ENCODE measurements at regions of chr7 and their contacts with region 1.

Region 1: DNA sequence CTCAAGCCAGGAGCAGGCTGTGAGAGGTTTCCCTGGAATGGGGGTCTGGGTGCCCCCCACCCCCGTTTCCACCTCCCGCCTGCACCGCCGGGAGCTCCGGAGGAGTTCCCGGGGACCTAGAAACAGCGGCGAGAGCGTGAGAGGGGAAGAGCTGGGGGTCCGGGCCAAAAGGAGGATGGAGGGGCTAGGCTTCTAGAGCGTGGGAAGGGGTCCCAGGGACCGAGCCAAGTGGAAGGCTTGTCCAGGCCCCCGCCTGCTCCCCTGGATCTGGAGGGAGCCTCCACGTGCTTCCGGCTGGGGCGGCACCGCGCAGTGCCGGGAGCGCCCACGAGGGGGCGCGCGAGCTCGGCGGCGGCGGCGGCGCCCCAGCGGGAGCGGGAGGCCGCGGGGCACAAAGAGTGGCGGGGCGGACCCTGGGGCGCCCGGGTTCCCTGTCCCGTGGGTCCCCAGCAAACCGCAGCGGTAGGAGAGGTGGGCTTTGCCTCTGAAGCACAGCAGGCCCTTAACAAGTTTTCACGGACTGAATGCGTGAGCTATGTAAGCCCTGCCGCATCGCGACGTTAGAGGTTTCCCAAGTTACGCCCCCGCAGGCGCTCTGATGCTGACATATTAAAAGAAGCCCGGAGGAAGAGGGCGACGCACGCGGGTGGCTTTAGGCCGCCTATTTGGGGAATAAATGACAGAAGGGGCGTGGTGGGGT is 104.4 kb upstream of the LRRC4 start:
- DNase-seq: peak; percentile 63
- H3K4me3 Mint-ChIP-seq: peak overlapping the region; percentile 68
- H3K27ac Mint-ChIP-seq: no peak overlapping the region
- H3K4me1 Mint-ChIP-seq: peaks cover 14% of the 10 kb centered on the region
- H3K27me3 Mint-ChIP-seq: peaks cover 65% of the 10 kb centered on the region

Region 2: GRCh38 chr7:127708788-127709187 is 426.9 kb before region 1 on chr7:
- CTCF ChIA-PET with region 1: interaction called, 12 read pairs
- DNase-seq: peak; percentile 85
- H3K4me3 Mint-ChIP-seq: no peak overlapping the region
- H3K27ac Mint-ChIP-seq: no peak overlapping the region
- H3K4me1 Mint-ChIP-seq: no peaks in the 10 kb centered on the region
- H3K27me3 Mint-ChIP-seq: no peaks in the 10 kb centered on the region

Region 3: DNA sequence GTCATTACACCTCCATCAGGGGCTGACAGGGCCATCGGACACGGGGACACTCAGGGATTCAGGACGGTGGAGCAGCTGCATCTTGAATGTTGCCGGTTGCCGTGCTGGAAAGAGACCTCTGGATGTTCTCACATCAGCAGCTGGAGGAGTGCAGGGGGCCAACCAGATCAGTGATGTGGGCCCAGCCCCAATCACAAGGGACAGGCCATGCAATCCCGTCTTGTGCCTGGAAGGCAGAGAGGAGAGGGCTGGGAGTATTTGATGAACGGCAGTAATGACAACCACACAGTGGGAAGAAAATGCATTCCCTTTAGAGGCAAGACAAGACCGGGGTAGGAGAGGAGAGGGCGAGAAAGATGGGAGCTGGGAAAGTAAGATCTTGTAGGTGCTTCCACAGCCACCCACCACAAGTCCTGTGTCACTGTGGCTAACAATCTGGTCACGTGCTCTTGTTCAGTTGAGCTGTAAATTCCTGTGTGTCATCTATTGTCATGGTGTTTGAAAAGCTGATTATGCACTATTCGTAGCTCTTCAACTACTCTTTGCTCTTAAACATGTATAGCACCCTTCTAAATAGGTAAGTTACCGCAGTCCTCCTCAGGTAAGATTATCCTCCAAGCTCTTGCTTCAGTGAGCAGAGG is 19.6 kb after region 1 on chr7:
- CTCF ChIA-PET with region 1: interaction called, 13 read pairs
- DNase-seq: no peak
- H3K4me3 Mint-ChIP-seq: no peak overlapping the region
- H3K27ac Mint-ChIP-seq: no peak overlapping the region
- H3K4me1 Mint-ChIP-seq: no peaks in the 10 kb centered on the region
- H3K27me3 Mint-ChIP-seq: peaks cover 45% of the 10 kb centered on the region

Measured in activated naive CD4-positive, alpha-beta T cell treated with anti-CD3 and anti-CD28 coated beads, Interleukin-2, amount 10 ng/mL, durations not matched to agents 7 days and 5 days (primary cell).